Testis (tissue), 5 donors: ENCODE measurements at regions of chr15 and their contacts with region 1.

Region 1: GRCh38 chr15:33309602-33310276 is 1.0 kb upstream of the RYR3 start:
- DNase-seq: peak; percentile 47
- H3K4me3 ChIP-seq: no peak overlapping the region
- H3K27ac ChIP-seq: no peak overlapping the region
- H3K4me1 ChIP-seq: peaks cover 7% of the 10 kb centered on the region
- H3K27me3 ChIP-seq: no peaks in the 10 kb centered on the region
- CTCF ChIP-seq: no peak
- POLR2A ChIP-seq: no peak

Region 2: DNA sequence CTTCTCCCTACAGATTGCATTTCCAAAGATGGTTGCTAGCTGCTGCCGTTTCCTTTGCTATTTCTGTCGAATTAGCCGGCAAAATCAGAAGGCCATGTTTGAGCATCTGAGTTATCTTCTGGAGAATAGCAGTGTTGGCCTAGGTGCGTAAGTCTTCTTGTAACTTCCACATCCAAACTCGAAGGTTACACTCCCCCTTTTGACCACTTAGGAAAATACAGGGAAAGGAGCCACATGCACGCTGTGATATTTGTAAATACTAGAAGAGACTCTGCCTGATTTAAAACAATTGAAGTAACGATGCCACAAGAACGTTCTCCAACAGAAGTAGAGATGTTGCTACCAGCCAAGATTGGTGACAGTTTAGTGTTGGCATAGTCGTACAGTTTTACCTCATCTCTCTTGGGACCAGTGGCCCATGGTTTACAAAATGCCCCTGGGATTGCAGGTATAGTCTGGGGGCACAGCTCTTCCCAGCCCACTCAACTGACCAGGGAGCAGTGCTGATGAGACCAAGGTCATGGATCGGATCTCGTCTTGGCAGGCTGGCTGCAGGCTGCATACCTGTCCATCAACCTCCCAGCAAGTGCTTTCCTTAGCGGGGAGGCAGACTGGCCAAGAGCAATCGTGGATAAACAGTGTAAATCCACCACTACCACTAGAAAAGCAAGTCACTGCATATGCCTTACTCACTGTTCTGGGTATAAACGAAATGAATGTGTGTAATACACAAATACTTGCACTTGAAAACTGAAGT is 390.1 kb after region 1 on chr15:
- intact Hi-C with region 1: loop called (anchors 10 kb)
- DNase-seq: no peak
- H3K4me3 ChIP-seq: no peak overlapping the region
- H3K27ac ChIP-seq: no peak overlapping the region
- H3K4me1 ChIP-seq: no peaks in the 10 kb centered on the region
- H3K27me3 ChIP-seq: no peaks in the 10 kb centered on the region
- CTCF ChIP-seq: peak in 1 of 3 experiments; percentile 20
- POLR2A ChIP-seq: no peak